ENCODE measurements at regions of chr10 and their contacts with region 1.

Region 1: DNA sequence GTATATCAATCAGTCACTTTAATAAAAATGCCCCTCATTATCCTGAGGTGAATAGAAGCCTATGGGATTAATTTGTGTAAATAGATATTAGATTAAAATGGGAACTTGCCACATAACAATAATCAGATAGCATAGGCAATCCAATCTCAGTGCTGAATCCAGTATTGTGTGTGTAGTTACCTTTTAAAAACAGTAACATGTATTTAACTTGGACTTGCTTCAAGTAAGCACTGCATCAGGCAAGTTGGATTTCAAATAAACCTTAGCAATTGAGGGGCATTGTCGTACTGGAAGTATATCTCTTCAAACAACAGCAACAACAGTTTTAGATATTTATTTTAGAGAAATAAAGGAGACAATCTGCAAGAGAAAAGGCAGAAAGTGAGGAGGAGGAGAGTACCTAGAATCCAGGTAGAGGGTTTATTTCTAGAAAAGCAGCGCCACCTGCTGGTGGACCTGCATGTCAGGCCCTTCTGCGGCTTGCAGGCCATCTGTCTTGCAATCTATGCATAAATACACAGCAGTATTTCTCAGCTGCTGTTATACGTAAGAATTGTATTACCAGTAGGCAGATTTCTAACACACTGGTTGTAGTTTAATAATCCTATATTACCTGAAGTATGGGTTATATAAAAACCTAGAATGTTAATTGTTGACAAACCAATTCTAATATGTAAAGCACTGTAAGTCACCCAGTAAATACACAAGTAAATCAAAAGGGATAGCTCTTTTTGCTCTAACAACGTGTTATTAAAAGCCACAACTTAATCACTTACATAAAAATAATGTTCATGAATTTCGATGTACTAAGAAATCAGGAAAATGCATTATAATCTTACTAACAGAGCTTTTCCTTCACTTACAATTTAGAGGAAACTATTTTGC is 652.8 kb downstream of the KCNMA1 start:
- DNase-seq: no peak
- ATAC-seq: peak; percentile 97
- H3K4me3 ChIP-seq: no peak overlapping the region
- H3K27ac ChIP-seq: no peak overlapping the region
- H3K4me1 ChIP-seq: no peaks in the 10 kb centered on the region
- H3K27me3 ChIP-seq: no peaks in the 10 kb centered on the region; a peak in 1 of 4 replicates
- CTCF ChIP-seq: peak; percentile 87 to 94 (median 91)
- EP300 ChIP-seq: no peak
- POLR2A ChIP-seq: no peak
- RAD21 ChIP-seq: peak; percentile 73

Region 2: GRCh38 chr10:76303682-76304316 is 681.0 kb before region 1 on chr10:
- CTCF ChIA-PET with region 1: no interaction called
- POLR2A ChIA-PET with region 1: no interaction called
- RAD21 ChIA-PET with region 1: no interaction called
- SMC1A ChIA-PET with region 1: no interaction called
- in situ Hi-C with region 1: no loop called
- intact Hi-C with region 1: loop called (anchors 10 kb)
- DNase-seq: no peak
- ATAC-seq: peak; percentile 95
- H3K4me3 ChIP-seq: no peak overlapping the region
- H3K27ac ChIP-seq: no peak overlapping the region
- H3K4me1 ChIP-seq: no peaks in the 10 kb centered on the region
- H3K27me3 ChIP-seq: no peaks in the 10 kb centered on the region
- CTCF ChIP-seq: peak; percentile 29 to 53 (median 39); a peak in 3 of 6 replicates
- EP300 ChIP-seq: no peak
- POLR2A ChIP-seq: no peak
- RAD21 ChIP-seq: peak; percentile 30; the same call in 1 of the 2 replicates

Region 3: GRCh38 chr10:76632777-76633071 is 352.1 kb before region 1 on chr10:
- CTCF ChIA-PET with region 1: interaction called, 3 read pairs
- POLR2A ChIA-PET with region 1: no interaction called
- RAD21 ChIA-PET with region 1: interaction called, 3 read pairs
- SMC1A ChIA-PET with region 1: no interaction called
- in situ Hi-C with region 1: loop called (anchors 10 kb)
- intact Hi-C with region 1: loop called (anchors 5 kb)
- DNase-seq: no peak
- ATAC-seq: peak; percentile 91
- H3K4me3 ChIP-seq: no peak overlapping the region
- H3K27ac ChIP-seq: no peak overlapping the region
- H3K4me1 ChIP-seq: no peaks in the 10 kb centered on the region
- H3K27me3 ChIP-seq: no peaks in the 10 kb centered on the region; a peak in 1 of 4 replicates
- CTCF ChIP-seq: peak; percentile 23 to 45 (median 41); a peak in 4 of 6 replicates
- EP300 ChIP-seq: no peak
- POLR2A ChIP-seq: no peak
- RAD21 ChIP-seq: no peak

Region 4: DNA sequence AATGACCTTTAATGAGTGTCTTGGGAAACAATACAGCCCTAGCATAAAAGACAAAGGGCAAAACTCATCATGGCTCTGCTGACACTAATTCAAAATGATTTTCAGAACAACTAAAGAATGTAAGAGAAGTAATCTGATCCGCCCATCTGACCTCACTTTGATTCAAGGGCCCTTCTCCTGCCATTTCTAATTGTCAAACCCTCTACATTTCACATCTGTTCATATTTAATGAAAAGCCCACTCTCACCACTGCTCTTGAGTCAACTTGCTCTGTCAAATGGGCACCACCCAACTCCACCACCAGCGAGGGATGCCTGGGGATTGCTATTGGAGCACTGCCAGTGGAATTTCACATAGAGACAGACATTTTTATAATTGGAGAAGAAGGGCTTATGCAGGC is 13.7 kb after region 1 on chr10:
- CTCF ChIA-PET with region 1: interaction called, 25 read pairs
- POLR2A ChIA-PET with region 1: no interaction called
- RAD21 ChIA-PET with region 1: no interaction called
- SMC1A ChIA-PET with region 1: interaction called, 4 read pairs
- in situ Hi-C with region 1: no loop called
- intact Hi-C with region 1: no loop called
- DNase-seq: no peak
- ATAC-seq: no peak
- H3K4me3 ChIP-seq: no peak overlapping the region
- H3K27ac ChIP-seq: no peak overlapping the region
- H3K4me1 ChIP-seq: no peaks in the 10 kb centered on the region
- H3K27me3 ChIP-seq: no peaks in the 10 kb centered on the region
- CTCF ChIP-seq: no peak
- EP300 ChIP-seq: no peak
- POLR2A ChIP-seq: no peak
- RAD21 ChIP-seq: no peak

Region 5: GRCh38 chr10:77120012-77120411 is 135.2 kb after region 1 on chr10:
- CTCF ChIA-PET with region 1: no interaction called
- POLR2A ChIA-PET with region 1: no interaction called
- RAD21 ChIA-PET with region 1: no interaction called
- SMC1A ChIA-PET with region 1: no interaction called
- in situ Hi-C with region 1: no loop called
- intact Hi-C with region 1: no loop called
- DNase-seq: no peak
- ATAC-seq: no peak
- H3K4me3 ChIP-seq: no peak overlapping the region
- H3K27ac ChIP-seq: no peak overlapping the region
- H3K4me1 ChIP-seq: no peaks in the 10 kb centered on the region
- H3K27me3 ChIP-seq: no peaks in the 10 kb centered on the region
- CTCF ChIP-seq: no peak
- EP300 ChIP-seq: no peak
- POLR2A ChIP-seq: no peak
- RAD21 ChIP-seq: no peak

Measured in GM12878 (cell line).